Right ventricle myocardium superior (tissue), 1 donor: ENCODE measurements at regions of chr12 and their contacts with region 1.

Region 1: DNA sequence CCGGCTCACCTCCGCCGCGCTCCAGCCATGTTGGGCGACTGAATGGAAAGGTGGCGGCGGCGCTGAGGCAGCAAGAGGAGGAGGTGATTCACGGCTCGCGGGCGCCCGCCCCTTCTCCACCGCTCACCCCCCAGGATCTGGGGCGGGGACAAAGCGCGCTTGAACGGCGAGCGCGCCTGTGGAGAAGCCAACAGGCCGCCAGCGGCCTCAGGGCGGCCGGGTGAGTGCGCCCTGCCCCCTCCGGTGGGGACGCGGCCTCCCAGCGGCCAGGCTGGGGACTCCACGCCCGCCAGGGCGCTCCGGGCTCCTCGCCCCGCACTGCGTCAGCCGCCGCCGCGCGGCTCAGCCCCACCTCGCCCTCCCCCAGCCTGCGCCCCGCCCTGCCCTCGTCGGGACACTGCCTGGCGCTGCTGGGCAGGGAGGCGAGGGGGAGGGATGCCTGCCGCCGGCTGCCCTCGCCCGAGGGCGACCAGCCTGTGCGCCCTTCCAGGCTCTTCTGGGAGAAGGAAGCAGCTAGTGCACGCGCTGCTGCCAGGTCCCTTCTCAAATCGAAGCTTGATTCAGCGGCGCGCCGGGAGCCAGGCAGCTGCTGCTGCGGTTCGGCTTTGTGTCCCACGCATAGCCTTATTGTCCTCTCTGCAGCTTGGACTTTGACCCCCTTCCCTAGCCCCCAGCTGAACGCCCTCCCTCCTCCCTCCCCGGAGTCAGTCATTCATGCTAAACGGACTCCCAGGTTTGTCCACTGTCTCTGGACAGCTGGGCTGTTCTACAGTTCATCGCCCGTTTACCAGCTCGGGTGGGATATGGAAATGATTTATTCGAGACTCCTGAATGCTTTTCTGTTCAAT is at the start of gene KIF21A:
- DNase-seq: peak; percentile 92
- ATAC-seq: peak; percentile 95
- total RNA-seq, gene KIF21A: 52.6 TPM

Region 2: DNA sequence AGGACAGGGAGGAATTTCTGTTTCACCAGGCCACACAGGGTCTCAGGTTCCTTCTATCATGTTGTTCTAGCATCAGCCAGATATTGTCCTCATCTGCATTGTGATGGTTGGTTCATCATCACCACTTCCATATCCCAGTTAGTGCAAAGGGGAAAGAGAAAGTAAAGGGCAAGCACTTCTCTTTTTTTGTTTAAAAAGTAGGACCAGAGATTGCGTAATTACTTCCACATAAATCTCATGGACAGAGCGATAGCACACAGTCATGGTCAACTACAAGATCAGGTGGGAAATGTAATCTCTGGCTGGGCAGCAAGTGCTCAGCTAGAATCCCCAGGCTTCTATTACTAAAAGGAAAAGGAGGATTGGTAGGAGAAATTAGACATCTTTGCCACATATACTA is 155.5 kb before region 1 on chr12:
- intact Hi-C with region 1: no loop called
- DNase-seq: no peak
- ATAC-seq: no peak

Region 3: DNA sequence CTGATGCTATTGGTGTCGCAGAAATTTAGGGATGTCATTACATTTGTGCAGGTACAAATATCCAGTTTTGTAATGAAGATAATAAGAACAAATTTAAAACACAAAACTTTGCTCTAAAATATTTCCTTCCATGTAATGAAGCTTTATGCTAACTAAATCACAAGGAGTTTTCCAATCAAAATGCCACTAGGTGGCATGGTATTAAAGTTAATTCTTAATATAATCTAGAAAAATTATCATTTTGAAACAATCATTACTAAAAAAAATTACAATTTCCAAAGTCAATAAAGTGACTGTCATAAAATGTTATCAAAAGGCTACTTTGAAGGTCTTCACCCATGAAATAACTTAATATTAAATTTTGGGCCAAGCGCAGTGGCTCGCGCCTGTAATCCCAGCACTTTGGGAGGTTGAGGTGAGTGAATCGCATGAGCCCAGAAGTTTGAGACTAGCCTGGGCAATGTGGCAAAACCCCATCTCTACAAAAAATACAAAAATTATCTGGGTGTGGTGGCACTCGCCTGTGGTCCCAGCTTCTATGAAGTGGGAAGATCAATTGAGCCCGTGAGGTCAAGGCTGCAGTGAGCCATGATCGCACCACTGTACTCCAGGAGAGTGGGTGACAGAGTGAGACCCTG is 77.8 kb before region 1 on chr12:
- intact Hi-C with region 1: loop called (anchors 10 kb)
- DNase-seq: no peak
- ATAC-seq: no peak

Region 4: GRCh38 chr12:39553471-39553870 is 110.2 kb after region 1 on chr12:
- intact Hi-C with region 1: no loop called
- DNase-seq: no peak
- ATAC-seq: no peak

Region 5: DNA sequence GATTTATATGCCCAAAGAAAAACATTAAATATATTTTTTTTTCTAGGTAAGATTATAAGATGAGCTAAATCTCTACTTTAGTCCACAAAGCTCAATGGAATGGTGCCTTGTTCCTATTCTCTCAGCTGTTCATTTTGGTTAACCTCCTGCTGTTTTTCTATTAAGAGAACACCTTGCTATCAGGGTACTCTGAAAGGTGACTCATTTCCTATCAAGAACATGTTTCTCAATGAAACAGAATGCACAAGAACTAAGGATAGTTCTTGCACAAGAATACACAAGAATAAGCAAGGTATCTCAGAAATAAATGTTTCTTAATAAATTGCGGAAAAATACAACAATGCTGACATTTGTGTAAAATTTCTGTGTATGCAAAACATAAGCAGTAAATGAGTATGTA is 162.2 kb after region 1 on chr12:
- intact Hi-C with region 1: no loop called
- DNase-seq: no peak
- ATAC-seq: no peak